ENCODE measurements at regions of chr12 and their contacts with region 1.

Region 1: GRCh38 chr12:89524541-89525285 is at the start of gene GALNT4:
- DNase-seq: peak; percentile 90
- ATAC-seq: peak; percentile 69
- H3K4me3 ChIP-seq: peak within 1 kb of the TSS; percentile 91
- H3K27ac ChIP-seq: peak within 1 kb of the TSS; percentile 81
- H3K4me1 ChIP-seq: peaks cover 48% of the 10 kb centered on the region
- H3K27me3 ChIP-seq: no peaks in the 10 kb centered on the region
- CTCF ChIP-seq: peak; percentile 75
- total RNA-seq, gene GALNT4: 6.8 and 8.1 TPM in 2 replicates

Region 2: DNA sequence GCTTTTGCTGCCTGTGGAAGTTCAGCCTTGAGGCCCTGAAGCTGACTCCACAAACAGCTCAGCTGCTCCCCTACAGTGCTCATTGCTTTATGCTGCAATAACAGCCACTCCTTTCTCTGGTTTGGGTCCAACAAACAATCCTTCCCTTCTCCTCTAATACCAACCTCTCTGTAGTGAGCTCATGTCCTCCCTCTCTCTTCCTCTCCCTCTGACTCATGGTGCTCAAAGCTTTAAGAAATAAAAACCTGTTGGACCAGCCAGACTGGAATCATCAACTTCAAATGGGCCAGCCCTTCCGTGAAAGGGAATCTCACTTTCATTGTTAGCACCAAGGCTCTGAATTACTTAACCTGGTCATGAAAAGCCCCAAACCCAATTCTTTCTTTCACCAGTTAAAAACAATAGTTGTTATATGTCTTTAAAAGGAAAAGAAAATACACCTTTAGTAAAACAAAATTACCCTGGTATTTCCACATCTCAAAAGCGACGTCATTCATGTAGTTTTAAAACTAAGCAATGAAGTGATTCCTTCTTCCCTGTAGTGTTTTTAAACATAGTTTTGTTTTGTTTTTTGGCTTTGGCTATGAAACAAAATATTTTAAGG is 298.8 kb before region 1 on chr12:
- CTCF ChIA-PET with region 1: no interaction called
- POLR2A ChIA-PET with region 1: no interaction called
- intact Hi-C with region 1: loop called (anchors 10 kb)
- DNase-seq: peak; percentile 99
- ATAC-seq: peak; percentile 97
- H3K4me3 ChIP-seq: peak overlapping the region; percentile 55
- H3K27ac ChIP-seq: peak overlapping the region; percentile 95
- H3K4me1 ChIP-seq: peaks cover 40% of the 10 kb centered on the region
- H3K27me3 ChIP-seq: no peaks in the 10 kb centered on the region
- CTCF ChIP-seq: no peak

Region 3: GRCh38 chr12:89373763-89374572 is 150.7 kb before region 1 on chr12:
- CTCF ChIA-PET with region 1: no interaction called
- POLR2A ChIA-PET with region 1: no interaction called
- intact Hi-C with region 1: loop called (anchors 5 kb)
- DNase-seq: peak; percentile 76
- ATAC-seq: peak; percentile 45
- H3K4me3 ChIP-seq: no peak overlapping the region
- H3K27ac ChIP-seq: peak overlapping the region; percentile 92
- H3K4me1 ChIP-seq: peaks cover 77% of the 10 kb centered on the region
- H3K27me3 ChIP-seq: no peaks in the 10 kb centered on the region
- CTCF ChIP-seq: no peak

Region 4: GRCh38 chr12:89470741-89471509 is 53.8 kb before region 1 on chr12:
- CTCF ChIA-PET with region 1: no interaction called
- POLR2A ChIA-PET with region 1: interaction called, 3 read pairs
- intact Hi-C with region 1: loop called (anchors 1 kb)
- DNase-seq: peak; percentile 80
- ATAC-seq: peak; percentile 43
- H3K4me3 ChIP-seq: no peak overlapping the region
- H3K27ac ChIP-seq: peak overlapping the region; percentile 38
- H3K4me1 ChIP-seq: peaks cover 55% of the 10 kb centered on the region
- H3K27me3 ChIP-seq: no peaks in the 10 kb centered on the region
- CTCF ChIP-seq: peak; percentile 86

Region 5: DNA sequence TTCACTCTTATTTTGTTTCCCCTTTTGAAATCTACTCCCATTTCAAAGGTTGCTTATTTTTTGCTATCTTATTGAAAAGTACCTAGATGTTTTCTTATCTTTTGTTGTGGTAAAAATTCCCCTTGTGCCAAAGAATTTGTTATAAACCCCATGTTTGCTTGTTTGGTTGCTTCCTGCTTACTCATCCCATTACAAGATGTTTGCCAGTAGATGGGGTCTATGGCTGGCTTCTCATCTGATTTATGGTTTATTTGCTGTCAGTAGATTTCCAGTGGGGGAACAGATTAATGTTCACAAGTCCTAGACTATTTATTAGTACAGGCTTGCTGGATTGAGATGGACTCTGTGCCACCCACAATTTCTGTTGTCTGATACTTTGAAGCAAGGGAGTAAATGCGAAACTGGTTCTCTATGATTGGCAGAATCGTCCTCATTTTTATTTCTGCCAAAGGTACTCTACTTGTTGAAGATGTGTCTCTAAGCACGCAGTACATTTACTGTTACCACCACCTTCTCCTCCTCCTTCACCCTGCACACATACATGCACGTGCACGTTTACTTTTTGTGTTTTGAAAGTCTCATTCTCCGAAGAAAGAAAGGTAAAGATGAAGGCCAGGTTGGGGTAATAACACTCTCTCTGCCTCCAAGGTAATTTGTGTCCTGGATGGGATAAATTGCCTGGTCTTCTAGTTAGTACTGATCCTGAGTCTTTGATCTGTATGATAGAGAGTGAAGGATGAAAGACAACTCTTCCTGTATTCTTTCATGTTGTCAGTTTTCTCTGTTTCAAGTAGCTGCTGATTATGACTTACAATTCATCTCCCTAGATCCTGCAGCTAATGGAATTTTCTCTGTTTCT is 301.1 kb after region 1 on chr12:
- CTCF ChIA-PET with region 1: no interaction called
- POLR2A ChIA-PET with region 1: no interaction called
- intact Hi-C with region 1: no loop called
- DNase-seq: peak; percentile 90
- ATAC-seq: peak; percentile 86
- H3K4me3 ChIP-seq: peak overlapping the region; percentile 13; the same call in 1 of the 2 replicates
- H3K27ac ChIP-seq: peak overlapping the region; percentile 72
- H3K4me1 ChIP-seq: peaks cover 23% of the 10 kb centered on the region
- H3K27me3 ChIP-seq: no peaks in the 10 kb centered on the region
- CTCF ChIP-seq: no peak

Measured in PC-3 (cell line).